Sigmoid colon (tissue), 7 donors: ENCODE measurements at regions of chr10 and their contacts with region 1.

Region 1: DNA sequence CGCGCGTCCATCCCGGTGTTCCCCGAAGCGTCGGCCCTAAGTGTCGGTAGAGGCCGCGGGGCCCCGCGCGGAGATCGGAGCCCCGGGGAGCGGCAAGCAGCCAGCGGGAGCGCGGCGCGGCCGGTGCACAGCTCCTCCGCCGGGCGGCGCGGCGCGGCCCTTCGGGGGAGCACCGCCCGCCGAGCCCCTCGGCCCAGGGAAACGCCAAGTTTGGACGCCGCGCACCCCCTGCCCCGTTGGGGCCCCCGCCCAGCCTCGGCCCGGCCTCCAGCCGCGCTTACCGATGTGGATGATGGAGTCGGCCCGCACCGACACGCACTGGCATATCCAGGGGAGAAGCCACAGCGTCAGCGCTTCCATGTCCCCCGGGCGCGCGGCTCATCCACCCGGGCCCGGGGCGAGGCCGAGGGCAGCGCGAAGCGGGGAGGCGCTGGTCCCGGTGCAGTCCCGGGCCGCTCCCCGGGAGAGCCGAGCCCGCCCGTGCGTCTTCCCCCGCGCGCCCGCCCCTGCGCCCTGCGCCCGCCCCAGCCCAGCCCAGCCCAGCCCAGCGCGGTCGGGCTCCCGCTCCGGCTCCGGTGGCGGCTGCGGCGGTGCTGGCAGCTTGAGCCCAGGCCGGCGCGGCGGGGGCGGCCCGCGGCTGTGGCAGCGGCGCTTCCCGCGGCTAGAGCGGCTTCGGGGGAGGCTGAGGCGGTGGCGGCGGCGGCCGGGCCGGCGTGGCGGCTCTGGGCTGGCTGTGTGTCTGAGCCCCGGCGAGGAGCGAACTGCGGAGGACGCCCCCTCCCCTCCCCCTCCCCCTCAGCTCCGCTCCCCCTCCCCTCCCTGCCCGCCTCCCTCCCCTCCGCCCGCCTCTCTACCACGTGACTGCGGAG is at the start of gene GRID1:
- DNase-seq: peak; percentile 69
- H3K4me3 ChIP-seq: peak within 1 kb of the TSS; percentile 27 to 64 (median 51)
- H3K27ac ChIP-seq: peak within 1 kb of the TSS in 2 of 4 donors; percentile 36 to 44
- H3K4me1 ChIP-seq: peaks cover 0 to 46% (median 39%) of the 10 kb centered on the region in 4 donors
- H3K27me3 ChIP-seq: peaks cover 28 to 78% (median 68%) of the 10 kb centered on the region in 3 donors
- CTCF ChIP-seq: no peak
- EP300 ChIP-seq: no peak
- POLR2A ChIP-seq: no peak
- total RNA-seq, gene GRID1: 0.66 to 4.7 (median 1.5) TPM

Region 2: DNA sequence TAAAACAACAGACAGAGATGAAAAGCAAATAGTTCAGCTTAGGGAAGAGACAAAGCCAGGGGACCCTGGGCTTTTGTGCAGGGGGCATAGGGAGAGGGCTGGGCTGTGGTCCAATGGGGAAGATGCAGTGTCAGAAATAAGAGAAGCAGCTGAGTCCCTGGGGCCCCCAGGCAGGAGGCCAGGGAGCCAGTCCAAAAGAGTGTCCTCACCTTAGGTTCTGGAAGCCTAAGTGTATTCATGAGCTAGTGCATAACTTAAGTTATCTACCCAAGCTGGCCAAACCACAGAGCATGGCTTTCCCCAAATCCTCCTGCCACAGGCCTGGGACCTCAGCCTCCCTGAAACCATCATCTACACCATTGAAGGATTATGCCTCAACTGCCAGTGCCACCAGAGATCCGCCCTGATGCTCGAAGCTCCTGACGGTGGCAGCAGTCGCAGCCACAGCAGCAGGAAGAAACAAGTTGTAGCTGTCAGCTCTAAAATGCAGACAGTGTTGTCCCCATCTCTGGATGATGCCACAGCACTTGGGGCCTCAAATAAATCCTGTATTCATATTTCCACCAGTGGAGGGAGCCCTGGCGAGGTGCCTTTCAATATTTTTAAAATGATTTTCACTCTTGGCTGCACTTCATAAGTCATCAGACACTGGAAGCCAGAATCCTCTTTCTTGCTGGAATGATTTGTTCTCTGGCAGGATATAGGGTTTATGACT is 574.3 kb before region 1 on chr10:
- intact Hi-C with region 1: loop called (anchors 10 kb)
- DNase-seq: no peak
- H3K4me3 ChIP-seq: no peak overlapping the region
- H3K27ac ChIP-seq: peak overlapping the region in 1 of 4 donors; percentile 16
- H3K4me1 ChIP-seq: peaks cover 0 to 43% (median 24%) of the 10 kb centered on the region in 4 donors
- H3K27me3 ChIP-seq: no peaks in the 10 kb centered on the region
- CTCF ChIP-seq: peak in 1 of 4 experiments; percentile 29
- EP300 ChIP-seq: no peak
- POLR2A ChIP-seq: no peak